CD8-positive, alpha-beta T cell (primary cell): ENCODE measurements at regions of chr10 and their contacts with region 1.

Region 1: GRCh38 chr10:73879296-73880173 is 5.2 kb upstream of the CAMK2G start:
- DNase-seq: peak; percentile 86 to 98 (median 95)
- ATAC-seq: peak; percentile 85
- H3K4me3 ChIP-seq: no peak overlapping the region
- H3K4me3 Mint-ChIP-seq: no peak overlapping the region
- H3K27ac ChIP-seq: peak overlapping the region; percentile 19 to 29
- H3K27ac Mint-ChIP-seq: peak overlapping the region; percentile 90
- H3K4me1 ChIP-seq: peaks cover 31% of the 10 kb centered on the region
- H3K4me1 Mint-ChIP-seq: peaks cover 42% of the 10 kb centered on the region
- H3K27me3 ChIP-seq: no peaks in the 10 kb centered on the region
- H3K27me3 Mint-ChIP-seq: no peaks in the 10 kb centered on the region
- CTCF ChIP-seq: peak; percentile 85

Region 2: GRCh38 chr10:73529089-73529832 is 350.3 kb before region 1 on chr10:
- CTCF ChIA-PET with region 1: no interaction called
- POLR2A ChIA-PET with region 1: no interaction called
- intact Hi-C with region 1: no loop called
- DNase-seq: peak; percentile 4 to 82 (median 43)
- ATAC-seq: peak; percentile 94
- H3K4me3 ChIP-seq: no peak overlapping the region
- H3K4me3 Mint-ChIP-seq: no peak overlapping the region
- H3K27ac ChIP-seq: no peak overlapping the region
- H3K27ac Mint-ChIP-seq: no peak overlapping the region
- H3K4me1 ChIP-seq: no peaks in the 10 kb centered on the region
- H3K4me1 Mint-ChIP-seq: no peaks in the 10 kb centered on the region
- H3K27me3 ChIP-seq: no peaks in the 10 kb centered on the region
- H3K27me3 Mint-ChIP-seq: no peaks in the 10 kb centered on the region
- CTCF ChIP-seq: peak; percentile 93

Region 3: DNA sequence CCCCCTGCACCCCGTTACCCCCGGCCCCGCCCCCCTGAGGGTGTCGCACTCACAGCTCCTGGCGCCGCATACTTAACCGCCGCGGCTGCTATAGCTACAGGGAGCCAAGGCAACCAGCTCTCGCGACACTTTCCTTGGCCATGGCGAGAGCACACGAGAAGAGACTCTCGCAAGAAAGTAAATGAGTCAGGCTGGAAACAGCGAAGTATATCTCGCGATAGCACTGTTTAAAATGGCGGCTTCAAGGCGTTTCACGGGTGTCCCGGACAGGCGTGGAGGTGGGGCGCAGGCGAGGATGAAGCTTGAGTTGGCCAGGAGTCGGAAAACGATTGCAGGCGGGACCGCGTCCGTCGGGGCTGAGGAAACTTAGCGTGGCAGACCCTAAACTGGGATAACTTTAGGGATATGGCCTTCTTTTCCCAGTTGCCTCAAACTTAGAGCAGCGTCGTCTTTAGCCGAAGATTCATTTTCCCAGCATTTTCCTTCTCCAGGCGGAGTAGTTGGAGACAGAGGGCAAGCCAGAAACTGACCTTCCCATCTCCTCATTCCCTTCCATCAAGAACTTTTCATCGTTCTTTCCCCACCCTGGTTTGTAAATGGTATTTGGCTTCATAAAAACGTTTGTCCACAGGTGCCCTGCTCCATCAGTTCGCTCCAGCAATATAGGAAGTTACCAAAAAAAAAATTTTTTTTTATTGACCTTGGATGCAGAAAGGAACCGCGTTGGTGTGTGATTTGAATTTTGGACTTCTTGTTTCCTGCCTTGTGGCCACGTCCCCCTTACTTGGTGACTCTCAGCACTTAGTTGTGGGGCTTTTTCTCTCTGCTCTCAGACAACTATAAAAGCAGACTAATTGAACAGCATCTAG is 253.4 kb before region 1 on chr10:
- CTCF ChIA-PET with region 1: no interaction called
- POLR2A ChIA-PET with region 1: no interaction called
- intact Hi-C with region 1: loop called in 1 of 2 experiments (anchors 10 kb)
- DNase-seq: peak; percentile 84 to 99 (median 92)
- ATAC-seq: peak; percentile 90
- H3K4me3 ChIP-seq: peak overlapping the region; percentile 78 to 90
- H3K4me3 Mint-ChIP-seq: peak overlapping the region; percentile 95
- H3K27ac ChIP-seq: peak overlapping the region; percentile 84 to 86
- H3K27ac Mint-ChIP-seq: peak overlapping the region; percentile 98
- H3K4me1 ChIP-seq: peaks cover 16% of the 10 kb centered on the region
- H3K4me1 Mint-ChIP-seq: peaks cover 21% of the 10 kb centered on the region
- H3K27me3 ChIP-seq: no peaks in the 10 kb centered on the region
- H3K27me3 Mint-ChIP-seq: no peaks in the 10 kb centered on the region
- CTCF ChIP-seq: no peak

Region 4: DNA sequence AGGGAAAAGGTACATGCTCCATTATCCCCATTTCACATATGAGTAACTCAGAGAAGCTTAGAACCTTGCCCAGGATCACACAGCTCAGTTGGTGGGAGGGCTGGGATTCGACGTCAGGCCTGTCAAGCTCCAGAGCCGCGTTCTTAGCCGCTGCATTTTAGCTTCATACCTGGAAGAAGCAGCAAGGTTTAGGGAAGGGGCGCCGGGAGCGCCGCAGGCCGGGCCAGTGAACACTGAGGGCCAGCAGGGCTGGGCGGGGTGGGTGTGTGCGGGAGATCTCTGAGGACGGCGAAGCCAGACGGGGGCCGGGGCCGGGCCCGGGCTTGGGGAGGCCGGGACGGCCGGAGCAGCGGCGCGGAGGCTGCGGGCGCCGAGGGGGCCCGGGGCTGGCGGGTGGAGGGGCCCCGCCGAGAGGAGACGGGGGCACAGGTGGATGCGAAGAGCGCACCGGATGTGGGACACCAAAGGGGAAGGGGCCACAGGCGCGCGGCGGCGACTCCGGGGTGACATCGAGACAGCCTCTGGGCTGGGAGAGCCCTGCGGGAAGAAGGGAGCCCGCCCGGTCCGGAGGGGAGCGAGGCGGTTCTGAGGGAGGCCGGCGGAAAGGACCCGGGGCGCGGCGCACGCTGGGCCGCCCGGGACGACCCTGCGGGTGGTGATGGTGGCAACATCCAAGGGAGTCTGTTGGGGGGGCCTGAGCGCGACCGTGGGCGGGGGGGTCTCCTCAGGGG is 68.6 kb before region 1 on chr10:
- CTCF ChIA-PET with region 1: interaction called, 12 read pairs
- POLR2A ChIA-PET with region 1: interaction called, 4 read pairs
- intact Hi-C with region 1: loop called (anchors 1 kb)
- DNase-seq: peak; percentile 19 to 79 (median 66)
- ATAC-seq: peak; percentile 12
- H3K4me3 ChIP-seq: peak overlapping the region; percentile 56 to 87
- H3K4me3 Mint-ChIP-seq: peak overlapping the region; percentile 89
- H3K27ac ChIP-seq: peak overlapping the region; percentile 71 to 91
- H3K27ac Mint-ChIP-seq: peak overlapping the region; percentile 95
- H3K4me1 ChIP-seq: peaks cover 48% of the 10 kb centered on the region
- H3K4me1 Mint-ChIP-seq: peaks cover 44% of the 10 kb centered on the region
- H3K27me3 ChIP-seq: no peaks in the 10 kb centered on the region
- H3K27me3 Mint-ChIP-seq: no peaks in the 10 kb centered on the region
- CTCF ChIP-seq: no peak

Region 5: GRCh38 chr10:73843271-73843670 is 36.3 kb before region 1 on chr10:
- CTCF ChIA-PET with region 1: interaction called, 528 read pairs
- POLR2A ChIA-PET with region 1: interaction called, 27 read pairs
- intact Hi-C with region 1: no loop called
- DNase-seq: no peak
- ATAC-seq: no peak
- H3K4me3 ChIP-seq: no peak overlapping the region
- H3K4me3 Mint-ChIP-seq: no peak overlapping the region
- H3K27ac ChIP-seq: no peak overlapping the region
- H3K27ac Mint-ChIP-seq: no peak overlapping the region
- H3K4me1 ChIP-seq: no peaks in the 10 kb centered on the region
- H3K4me1 Mint-ChIP-seq: no peaks in the 10 kb centered on the region
- H3K27me3 ChIP-seq: no peaks in the 10 kb centered on the region
- H3K27me3 Mint-ChIP-seq: no peaks in the 10 kb centered on the region
- CTCF ChIP-seq: no peak

Region 6: GRCh38 chr10:73865459-73866442 is 13.8 kb before region 1 on chr10:
- CTCF ChIA-PET with region 1: interaction called, 98 read pairs
- POLR2A ChIA-PET with region 1: interaction called, 13 read pairs
- intact Hi-C with region 1: loop called in 1 of 2 experiments (anchors 1 kb)
- DNase-seq: peak in 8 of 9 experiments; percentile 45 to 80 (median 62)
- ATAC-seq: peak; percentile 81
- H3K4me3 ChIP-seq: peak overlapping the region; percentile 41 to 73
- H3K4me3 Mint-ChIP-seq: peak overlapping the region; percentile 82
- H3K27ac ChIP-seq: peak overlapping the region; percentile 55 to 72
- H3K27ac Mint-ChIP-seq: peak overlapping the region; percentile 96
- H3K4me1 ChIP-seq: peaks cover 74% of the 10 kb centered on the region
- H3K4me1 Mint-ChIP-seq: peaks cover 85% of the 10 kb centered on the region
- H3K27me3 ChIP-seq: no peaks in the 10 kb centered on the region
- H3K27me3 Mint-ChIP-seq: no peaks in the 10 kb centered on the region
- CTCF ChIP-seq: no peak

Region 7: GRCh38 chr10:74081192-74081803 is 201.8 kb after region 1 on chr10:
- CTCF ChIA-PET with region 1: interaction called, 27 read pairs
- POLR2A ChIA-PET with region 1: no interaction called
- intact Hi-C with region 1: no loop called
- DNase-seq: peak; percentile 7 to 67 (median 36)
- ATAC-seq: peak; percentile 62
- H3K4me3 ChIP-seq: no peak overlapping the region
- H3K4me3 Mint-ChIP-seq: no peak overlapping the region
- H3K27ac ChIP-seq: no peak overlapping the region
- H3K27ac Mint-ChIP-seq: no peak overlapping the region
- H3K4me1 ChIP-seq: peaks cover 4% of the 10 kb centered on the region
- H3K4me1 Mint-ChIP-seq: peaks cover 17% of the 10 kb centered on the region
- H3K27me3 ChIP-seq: no peaks in the 10 kb centered on the region
- H3K27me3 Mint-ChIP-seq: no peaks in the 10 kb centered on the region
- CTCF ChIP-seq: peak; percentile 66

Region 8: DNA sequence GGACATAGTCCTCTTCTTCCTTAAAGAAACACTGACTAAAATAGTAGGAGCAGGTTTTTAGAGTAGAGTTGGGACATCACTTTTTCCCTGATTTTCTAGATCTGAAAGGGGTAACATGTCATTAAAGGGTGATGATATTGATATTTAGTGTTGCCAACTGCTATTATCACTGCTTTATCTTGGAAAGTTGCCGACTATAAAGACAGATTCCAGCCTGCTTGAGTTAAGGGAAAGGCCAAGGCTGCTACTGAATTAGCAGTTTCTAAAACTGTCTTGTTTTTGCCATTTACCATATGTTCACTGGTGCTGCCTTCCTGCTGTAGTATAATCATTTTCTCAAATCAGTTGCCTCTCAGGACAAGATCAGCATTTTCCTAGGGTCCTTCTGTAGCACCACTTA is 241.4 kb after region 1 on chr10:
- CTCF ChIA-PET with region 1: no interaction called
- POLR2A ChIA-PET with region 1: no interaction called
- intact Hi-C with region 1: no loop called
- DNase-seq: no peak
- ATAC-seq: no peak
- H3K4me3 ChIP-seq: no peak overlapping the region
- H3K4me3 Mint-ChIP-seq: no peak overlapping the region
- H3K27ac ChIP-seq: no peak overlapping the region
- H3K27ac Mint-ChIP-seq: peak overlapping the region; percentile 53
- H3K4me1 ChIP-seq: no peaks in the 10 kb centered on the region
- H3K4me1 Mint-ChIP-seq: no peaks in the 10 kb centered on the region
- H3K27me3 ChIP-seq: no peaks in the 10 kb centered on the region
- H3K27me3 Mint-ChIP-seq: no peaks in the 10 kb centered on the region
- CTCF ChIP-seq: no peak

Region 9: GRCh38 chr10:74134240-74134820 is 254.8 kb after region 1 on chr10:
- CTCF ChIA-PET with region 1: no interaction called
- POLR2A ChIA-PET with region 1: no interaction called
- intact Hi-C with region 1: no loop called
- DNase-seq: no peak
- ATAC-seq: no peak
- H3K4me3 ChIP-seq: no peak overlapping the region
- H3K4me3 Mint-ChIP-seq: no peak overlapping the region
- H3K27ac ChIP-seq: no peak overlapping the region
- H3K27ac Mint-ChIP-seq: no peak overlapping the region
- H3K4me1 ChIP-seq: no peaks in the 10 kb centered on the region
- H3K4me1 Mint-ChIP-seq: no peaks in the 10 kb centered on the region
- H3K27me3 ChIP-seq: no peaks in the 10 kb centered on the region
- H3K27me3 Mint-ChIP-seq: no peaks in the 10 kb centered on the region
- CTCF ChIP-seq: no peak

Region 10: DNA sequence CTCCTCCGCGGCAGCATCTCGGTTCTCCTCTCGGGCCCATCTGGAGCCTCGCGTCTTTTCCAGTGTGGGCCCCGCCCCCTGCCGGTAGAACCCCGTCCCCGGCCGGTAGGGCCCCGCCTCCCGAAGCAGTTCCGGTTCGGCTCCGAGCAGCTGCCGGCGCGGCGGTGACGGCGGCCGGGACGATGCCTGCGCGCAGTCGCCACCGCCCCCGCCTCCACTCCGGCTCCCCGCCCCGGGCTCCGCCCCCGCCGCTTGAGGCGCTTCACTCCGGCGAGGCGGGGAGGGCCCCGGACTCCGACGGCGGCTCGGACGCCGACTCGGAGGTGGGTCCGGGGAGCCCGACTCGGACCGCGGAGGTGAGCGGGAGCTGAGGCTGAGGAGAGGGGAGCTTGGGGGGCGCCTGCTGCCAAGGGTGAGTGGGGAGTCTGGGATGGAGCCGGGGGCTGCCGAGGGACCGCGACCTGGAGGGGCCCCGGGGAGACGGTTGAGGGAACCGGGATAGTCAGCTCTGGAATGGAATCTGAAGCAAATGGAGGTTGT is 1231.9 kb after region 1 on chr10 and contains the start of gene SAMD8:
- CTCF ChIA-PET with region 1: no interaction called
- POLR2A ChIA-PET with region 1: no interaction called
- intact Hi-C with region 1: loop called in 1 of 2 experiments (anchors 10 kb)
- DNase-seq: peak; percentile 83 to 98 (median 94)
- ATAC-seq: peak; percentile 77
- H3K4me3 ChIP-seq: peak within 1 kb of the TSS; percentile 68 to 99
- H3K4me3 Mint-ChIP-seq: peak within 1 kb of the TSS; percentile 83
- H3K27ac ChIP-seq: peak within 1 kb of the TSS; percentile 77 to 97
- H3K27ac Mint-ChIP-seq: peak within 1 kb of the TSS; percentile 97
- H3K4me1 ChIP-seq: peaks cover 20% of the 10 kb centered on the region
- H3K4me1 Mint-ChIP-seq: peaks cover 56% of the 10 kb centered on the region
- H3K27me3 ChIP-seq: no peaks in the 10 kb centered on the region
- H3K27me3 Mint-ChIP-seq: no peaks in the 10 kb centered on the region
- CTCF ChIP-seq: no peak
- total RNA-seq, gene SAMD8: 41.2 to 41.4 TPM